Thyroid gland (tissue), 4 donors: ENCODE measurements at regions of chr2 and their contacts with region 1.

Region 1: GRCh38 chr2:111659416-111660281 is 224.3 kb downstream of the ANAPC1 start:
- DNase-seq: peak; percentile 89 to 90
- H3K4me3 ChIP-seq: no peak overlapping the region
- H3K27ac ChIP-seq: peak overlapping the region; percentile 95 to 99 (median 99)
- H3K4me1 ChIP-seq: peaks cover 13 to 36% of the 10 kb centered on the region in 2 donors
- H3K27me3 ChIP-seq: no peaks in the 10 kb centered on the region
- CTCF ChIP-seq: no peak
- POLR2A ChIP-seq: peak in 1 of 2 donors; percentile 28

Region 2: GRCh38 chr2:111116843-111117597 is 542.6 kb before region 1 on chr2:
- intact Hi-C with region 1: loop called (anchors 5 kb)
- DNase-seq: peak; percentile 92 to 94
- H3K4me3 ChIP-seq: peak overlapping the region in 1 of 3 donors; percentile 23
- H3K27ac ChIP-seq: peak overlapping the region in 1 of 3 donors; percentile 10
- H3K4me1 ChIP-seq: peaks cover 31 to 37% of the 10 kb centered on the region in 2 donors
- H3K27me3 ChIP-seq: peaks cover 7% of the 10 kb centered on the region
- CTCF ChIP-seq: peak; percentile 71 to 98 (median 95)
- POLR2A ChIP-seq: no peak